ENCODE measurements at regions of chr18 and their contacts with region 1.

Region 1: DNA sequence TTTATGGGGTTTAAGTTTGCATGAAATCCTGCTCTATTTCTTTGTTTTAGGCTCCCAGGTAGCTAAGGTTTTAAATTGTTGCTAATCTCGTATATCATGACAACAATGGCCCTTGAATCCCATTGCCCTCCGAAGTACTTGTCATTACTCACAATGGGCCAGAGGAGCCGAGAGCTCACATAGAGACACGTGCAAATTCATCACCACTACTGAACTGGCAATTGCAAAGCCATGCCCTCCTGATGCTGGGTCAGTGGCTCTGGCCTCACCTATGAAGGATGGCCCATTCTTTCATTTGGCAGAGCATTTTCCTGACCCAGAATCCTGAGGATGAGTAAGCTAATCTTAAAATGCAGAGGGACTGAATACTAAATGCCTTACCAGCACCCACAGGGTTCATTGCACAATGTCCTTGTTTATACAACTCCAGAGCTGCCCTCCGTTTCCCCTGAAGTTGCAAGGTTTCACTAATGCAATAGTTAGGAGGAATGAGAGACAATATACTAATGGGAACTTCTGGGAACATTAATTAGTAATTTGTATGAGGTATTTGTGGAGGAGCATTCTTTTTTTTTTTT is 71.6 kb upstream of the GAREM1 start:
- DNase-seq: no peak

Region 2: DNA sequence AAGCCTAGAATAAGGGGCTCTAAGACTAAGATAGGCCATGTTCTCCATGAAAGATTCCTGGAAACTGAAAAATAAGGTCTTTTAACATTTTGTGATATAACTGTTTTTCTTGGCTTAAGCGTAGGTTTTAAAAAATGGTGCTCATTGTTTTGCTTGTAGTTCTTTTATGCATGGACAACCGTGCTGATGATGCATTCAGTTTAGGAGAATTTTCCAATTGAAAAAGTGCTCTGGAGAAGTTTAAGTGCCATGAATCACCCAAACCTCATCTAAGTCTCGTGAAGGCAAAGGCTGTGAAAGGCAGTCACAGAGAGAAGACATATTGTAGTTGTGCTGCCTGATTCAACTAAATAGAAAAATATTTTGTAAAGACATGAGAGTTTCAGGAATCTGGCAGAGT is 40.1 kb after region 1 on chr18:
- intact Hi-C with region 1: loop called in 1 of 2 experiments (anchors 1 kb)
- DNase-seq: no peak

Measured in posterior vena cava (tissue), 2 donors.